Activated CD4-positive, alpha-beta T cell treated with anti-CD3 and anti-CD28 coated beads for 36 hours (primary cell): ENCODE measurements at regions of chr19 and their contacts with region 1.

Region 1: GRCh38 chr19:18846862-18847548 is 15.2 kb downstream of the UPF1 start:
- DNase-seq: peak; percentile 84
- ATAC-seq: peak; percentile 63
- H3K4me3 Mint-ChIP-seq: no peak overlapping the region
- H3K27ac Mint-ChIP-seq: no peak overlapping the region
- H3K4me1 Mint-ChIP-seq: peaks cover 61% of the 10 kb centered on the region
- H3K27me3 Mint-ChIP-seq: no peaks in the 10 kb centered on the region

Region 2: GRCh38 chr19:18357041-18357440 is 490.0 kb before region 1 on chr19:
- CTCF ChIA-PET with region 1: no interaction called
- POLR2A ChIA-PET with region 1: no interaction called
- intact Hi-C with region 1: no loop called
- DNase-seq: no peak
- ATAC-seq: no peak
- H3K4me3 Mint-ChIP-seq: no peak overlapping the region
- H3K27ac Mint-ChIP-seq: no peak overlapping the region
- H3K4me1 Mint-ChIP-seq: no peaks in the 10 kb centered on the region
- H3K27me3 Mint-ChIP-seq: no peaks in the 10 kb centered on the region

Region 3: GRCh38 chr19:18450931-18451845 is 395.8 kb before region 1 on chr19:
- CTCF ChIA-PET with region 1: interaction called, 6 read pairs
- POLR2A ChIA-PET with region 1: no interaction called
- intact Hi-C with region 1: loop called in 1 of 2 experiments (anchors 1 kb)
- DNase-seq: peak; percentile 94
- ATAC-seq: peak; percentile 95
- H3K4me3 Mint-ChIP-seq: no peak overlapping the region
- H3K27ac Mint-ChIP-seq: peak overlapping the region; percentile 51
- H3K4me1 Mint-ChIP-seq: no peaks in the 10 kb centered on the region
- H3K27me3 Mint-ChIP-seq: no peaks in the 10 kb centered on the region

Region 4: GRCh38 chr19:18478569-18479311 is 368.3 kb before region 1 on chr19:
- CTCF ChIA-PET with region 1: no interaction called
- POLR2A ChIA-PET with region 1: no interaction called
- intact Hi-C with region 1: loop called in 1 of 2 experiments (anchors 10 kb)
- DNase-seq: peak; percentile 89
- ATAC-seq: peak; percentile 92
- H3K4me3 Mint-ChIP-seq: peak overlapping the region; percentile 59
- H3K27ac Mint-ChIP-seq: peak overlapping the region; percentile 95
- H3K4me1 Mint-ChIP-seq: peaks cover 80% of the 10 kb centered on the region
- H3K27me3 Mint-ChIP-seq: no peaks in the 10 kb centered on the region

Region 5: DNA sequence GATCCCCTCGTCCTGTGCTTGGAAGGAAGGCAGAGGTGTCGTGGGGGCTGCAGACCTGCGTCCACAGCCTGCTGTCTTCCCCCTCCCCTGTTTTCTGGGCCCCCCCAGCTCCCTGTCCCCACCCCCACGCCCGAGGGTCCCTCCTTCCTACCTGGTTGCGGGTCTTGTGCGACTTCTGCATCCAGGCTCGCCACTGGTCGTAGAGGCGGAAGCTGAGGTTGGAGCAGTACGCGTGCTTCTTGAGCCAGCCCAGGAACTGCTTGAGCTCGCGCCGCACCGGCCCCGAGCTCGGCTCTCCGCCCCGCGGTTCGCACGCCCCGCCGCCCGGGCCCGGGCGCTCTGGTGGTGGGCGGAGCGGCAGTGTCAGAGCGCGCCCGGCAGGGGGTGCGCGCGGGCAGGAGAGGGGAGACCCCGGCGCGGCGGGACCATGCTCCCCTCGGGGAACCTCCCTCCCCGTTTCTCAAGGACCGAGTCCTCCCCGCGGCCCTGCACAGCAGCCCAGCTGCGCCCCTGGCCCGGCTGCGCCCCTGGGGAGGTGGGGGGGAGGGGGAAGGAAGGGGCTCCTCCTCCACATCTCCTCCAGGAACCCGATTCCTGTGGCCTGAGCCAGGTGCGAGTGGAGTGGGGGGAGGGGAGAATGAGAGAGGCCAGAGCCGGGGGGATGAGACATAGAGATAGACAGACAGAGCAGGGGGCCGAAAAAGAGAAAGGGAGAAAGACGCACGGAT is 252.7 kb before region 1 on chr19:
- CTCF ChIA-PET with region 1: interaction called, 5 read pairs
- POLR2A ChIA-PET with region 1: no interaction called
- intact Hi-C with region 1: loop called (anchors 1 to 5 kb)
- DNase-seq: peak; percentile 87
- ATAC-seq: peak; percentile 72
- H3K4me3 Mint-ChIP-seq: peak overlapping the region; percentile 72
- H3K27ac Mint-ChIP-seq: peak overlapping the region; percentile 56
- H3K4me1 Mint-ChIP-seq: peaks cover 23% of the 10 kb centered on the region
- H3K27me3 Mint-ChIP-seq: peaks cover 3% of the 10 kb centered on the region

Region 6: DNA sequence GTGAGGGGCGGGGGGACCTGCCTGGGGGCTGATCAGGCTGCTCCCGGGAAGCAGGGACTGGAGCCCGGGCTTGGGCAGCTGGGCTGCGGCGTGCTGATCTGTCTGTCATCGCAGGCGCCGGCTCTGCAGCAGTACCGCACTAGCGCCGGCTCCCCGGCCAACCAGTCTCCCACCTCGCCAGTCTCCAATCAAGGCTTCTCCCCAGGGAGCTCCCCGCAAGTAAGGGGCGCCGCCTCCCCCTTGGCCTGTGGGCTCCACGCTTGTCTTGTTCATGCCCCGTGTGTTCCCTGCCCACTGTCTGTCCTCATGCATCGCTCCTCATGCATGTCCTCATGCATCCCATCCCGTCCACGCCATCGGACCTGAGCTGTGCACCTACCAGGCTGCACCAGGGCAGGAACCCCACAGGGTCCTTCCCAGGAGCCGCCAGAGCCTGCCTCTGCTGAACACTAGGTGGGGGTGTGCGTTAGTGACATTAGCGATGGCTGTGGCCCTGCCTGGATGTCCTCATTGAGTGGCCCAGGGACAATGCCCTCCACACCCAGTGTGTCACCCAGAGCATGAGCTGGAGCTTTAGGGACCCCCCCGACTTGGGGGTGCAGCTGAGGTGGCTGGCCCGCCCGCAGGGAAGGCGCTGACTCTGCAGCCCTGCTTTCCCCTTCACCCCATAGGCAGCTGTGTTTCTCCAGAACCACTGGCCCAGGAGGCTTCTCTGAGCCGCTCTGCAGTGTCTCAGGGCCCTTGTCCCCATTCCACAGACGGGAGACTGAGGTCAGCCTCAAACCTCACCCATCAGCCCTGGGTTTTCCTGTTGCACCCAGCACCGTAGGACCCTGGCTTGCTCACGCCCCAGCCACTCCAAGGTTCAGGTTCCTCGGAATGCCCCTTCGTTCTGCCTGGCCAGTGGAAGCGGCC is 75.4 kb before region 1 on chr19:
- CTCF ChIA-PET with region 1: interaction called, 3 read pairs
- POLR2A ChIA-PET with region 1: no interaction called
- intact Hi-C with region 1: loop called in 1 of 2 experiments (anchors 2 kb)
- DNase-seq: peak; percentile 38
- ATAC-seq: peak; percentile 57
- H3K4me3 Mint-ChIP-seq: peak overlapping the region; percentile 16
- H3K27ac Mint-ChIP-seq: no peak overlapping the region
- H3K4me1 Mint-ChIP-seq: no peaks in the 10 kb centered on the region
- H3K27me3 Mint-ChIP-seq: no peaks in the 10 kb centered on the region

Region 7: GRCh38 chr19:18817574-18817973 is 29.4 kb before region 1 on chr19:
- CTCF ChIA-PET with region 1: no interaction called
- POLR2A ChIA-PET with region 1: no interaction called
- intact Hi-C with region 1: no loop called
- DNase-seq: no peak
- ATAC-seq: no peak
- H3K4me3 Mint-ChIP-seq: no peak overlapping the region
- H3K27ac Mint-ChIP-seq: no peak overlapping the region
- H3K4me1 Mint-ChIP-seq: no peaks in the 10 kb centered on the region
- H3K27me3 Mint-ChIP-seq: peaks cover 4% of the 10 kb centered on the region

Region 8: DNA sequence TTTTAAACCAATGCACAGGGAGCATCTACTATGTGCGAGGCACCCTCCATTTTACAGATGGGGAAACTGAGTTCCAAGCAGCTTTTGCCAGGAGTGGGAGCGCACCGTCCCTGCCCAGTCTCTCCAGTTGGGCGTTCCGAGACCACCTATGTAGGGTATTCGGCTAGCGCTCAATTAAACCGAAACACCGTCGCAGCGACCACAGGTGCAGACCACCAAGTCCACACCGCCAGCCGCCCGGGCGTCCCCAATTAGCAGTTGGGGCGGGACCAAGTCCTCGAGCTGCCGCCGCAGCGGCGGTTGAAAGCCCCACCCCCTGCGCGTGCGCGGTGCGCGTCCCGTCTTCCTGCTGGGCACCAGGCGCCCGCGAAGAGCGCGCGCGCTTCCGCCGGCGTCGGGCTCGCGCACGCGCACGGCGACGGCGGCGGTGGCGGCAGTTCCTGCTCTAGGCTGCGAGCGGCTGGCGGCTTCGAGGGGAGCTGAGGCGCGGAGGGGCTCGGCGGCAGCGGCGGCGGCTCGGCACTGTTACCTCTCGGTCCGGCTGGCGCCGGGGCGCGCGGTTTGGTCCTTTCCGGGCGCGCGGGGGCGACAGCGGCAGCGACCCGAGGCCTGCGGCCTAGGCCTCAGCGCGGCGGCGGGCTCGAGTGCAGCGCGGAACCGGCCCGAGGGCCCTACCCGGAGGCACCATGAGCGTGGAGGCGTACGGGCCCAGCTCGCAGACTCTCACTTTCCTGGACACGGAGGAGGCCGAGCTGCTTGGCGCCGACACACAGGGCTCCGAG is 15.3 kb before region 1 on chr19 and contains the start of gene UPF1:
- CTCF ChIA-PET with region 1: interaction called, 47 read pairs
- POLR2A ChIA-PET with region 1: interaction called, 6 read pairs
- intact Hi-C with region 1: loop called in 1 of 2 experiments (anchors 1 kb)
- DNase-seq: peak; percentile 98
- ATAC-seq: peak; percentile 82
- H3K4me3 Mint-ChIP-seq: peak within 1 kb of the TSS; percentile 96
- H3K27ac Mint-ChIP-seq: peak within 1 kb of the TSS; percentile 90
- H3K4me1 Mint-ChIP-seq: peaks cover 34% of the 10 kb centered on the region
- H3K27me3 Mint-ChIP-seq: peaks cover 3% of the 10 kb centered on the region
- total RNA-seq, gene UPF1: 72.4 to 74.0 TPM

Region 9: DNA sequence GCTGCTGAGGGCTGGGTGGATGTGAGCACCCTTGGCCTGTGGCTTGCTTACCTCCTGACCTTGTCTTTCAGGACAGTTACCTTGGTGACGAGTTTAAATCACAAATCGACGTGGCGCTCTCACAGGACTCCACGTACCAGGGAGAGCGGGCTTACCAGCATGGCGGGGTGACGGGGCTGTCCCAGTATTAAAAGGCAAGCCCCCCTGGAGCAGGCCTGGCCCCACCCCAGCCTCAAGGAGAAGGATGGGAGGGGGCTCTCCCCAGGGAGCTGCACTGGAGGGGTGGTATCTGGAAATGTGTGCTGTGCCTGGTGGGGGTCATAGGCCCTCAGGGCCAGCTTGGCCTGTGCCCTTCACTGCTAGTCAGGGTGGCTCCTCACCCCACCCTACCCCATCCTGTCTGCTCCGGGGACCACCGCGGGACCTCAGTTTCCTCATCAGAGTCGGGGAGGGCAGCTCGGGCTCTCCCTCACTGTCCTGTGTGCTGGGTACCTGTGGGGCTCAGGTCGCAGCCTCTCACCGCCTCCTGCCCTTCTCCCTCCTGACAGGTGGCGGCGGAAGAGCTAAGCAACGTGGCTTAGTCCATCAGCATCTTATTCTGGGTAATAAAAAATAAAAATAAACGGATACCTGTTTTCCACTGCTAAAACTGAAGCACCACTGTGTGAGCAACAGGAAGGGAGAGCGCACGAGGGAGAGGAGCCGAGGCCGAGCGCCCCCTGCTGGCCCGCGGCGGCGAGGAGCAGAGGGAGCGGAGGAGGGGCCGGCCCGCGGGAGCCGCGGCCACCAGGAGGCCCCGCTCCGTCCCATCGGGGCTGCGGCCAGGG is 19.2 kb after region 1 on chr19:
- CTCF ChIA-PET with region 1: interaction called, 12 read pairs
- POLR2A ChIA-PET with region 1: interaction called, 3 read pairs
- intact Hi-C with region 1: no loop called
- DNase-seq: peak; percentile 83
- ATAC-seq: peak; percentile 92
- H3K4me3 Mint-ChIP-seq: no peak overlapping the region
- H3K27ac Mint-ChIP-seq: no peak overlapping the region
- H3K4me1 Mint-ChIP-seq: peaks cover 5% of the 10 kb centered on the region
- H3K27me3 Mint-ChIP-seq: peaks cover 3% of the 10 kb centered on the region

Region 10: GRCh38 chr19:18883526-18884304 is 36.7 kb after region 1 on chr19:
- CTCF ChIA-PET with region 1: no interaction called
- POLR2A ChIA-PET with region 1: no interaction called
- intact Hi-C with region 1: no loop called
- DNase-seq: no peak
- ATAC-seq: no peak
- H3K4me3 Mint-ChIP-seq: no peak overlapping the region
- H3K27ac Mint-ChIP-seq: no peak overlapping the region
- H3K4me1 Mint-ChIP-seq: no peaks in the 10 kb centered on the region
- H3K27me3 Mint-ChIP-seq: no peaks in the 10 kb centered on the region